B cell (primary cell): ENCODE measurements at regions of chr17 and their contacts with region 1.

Region 1: DNA sequence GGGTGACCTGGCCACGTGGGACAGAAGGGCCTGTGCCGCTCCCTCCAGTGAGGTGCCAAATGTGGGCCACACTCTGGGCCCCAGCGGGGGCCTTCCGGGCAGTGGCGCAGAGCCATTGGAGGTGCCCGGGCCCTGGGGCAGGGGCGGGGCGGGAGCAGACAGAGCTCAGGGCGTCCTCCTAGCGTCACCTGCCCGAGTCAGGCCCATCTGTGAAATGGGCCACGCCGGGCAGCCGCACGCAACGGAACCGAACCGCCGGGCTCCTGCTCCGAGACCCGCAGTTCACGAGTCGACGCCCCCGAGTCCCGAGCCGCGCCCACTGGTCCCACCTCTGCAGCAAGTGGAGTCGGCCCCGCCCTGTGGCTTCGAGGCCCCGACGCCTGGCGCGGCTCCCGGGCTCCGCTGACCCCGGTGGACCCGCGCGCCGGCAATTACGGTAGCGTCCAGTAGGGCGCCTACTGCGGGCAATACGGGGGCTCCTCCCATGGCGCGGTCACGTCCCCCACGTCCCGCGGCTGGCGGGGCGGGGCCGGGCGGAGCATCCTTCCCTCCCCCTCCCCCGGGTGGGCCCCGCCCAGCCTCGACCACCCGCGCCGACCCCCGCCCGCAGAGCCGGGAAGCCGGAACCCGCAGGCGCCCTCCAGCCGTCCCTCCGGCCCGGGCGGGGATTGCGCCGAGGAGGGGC is 1.9 kb downstream of the SLC16A3 start:
- DNase-seq: peak; percentile 69
- ATAC-seq: peak; percentile 52
- H3K4me3 ChIP-seq: peak overlapping the region; percentile 31 to 69 (median 59)
- H3K4me3 Mint-ChIP-seq: peak overlapping the region; percentile 85
- H3K27ac ChIP-seq: peak overlapping the region; percentile 42 to 47
- H3K27ac Mint-ChIP-seq: peak overlapping the region; percentile 73
- H3K4me1 ChIP-seq: peaks cover 29 to 63% of the 10 kb centered on the region in 2 donors
- H3K4me1 Mint-ChIP-seq: peaks cover 31% of the 10 kb centered on the region
- H3K27me3 ChIP-seq: no peaks in the 10 kb centered on the region
- H3K27me3 Mint-ChIP-seq: no peaks in the 10 kb centered on the region
- CTCF ChIP-seq: peak; percentile 67

Region 2: DNA sequence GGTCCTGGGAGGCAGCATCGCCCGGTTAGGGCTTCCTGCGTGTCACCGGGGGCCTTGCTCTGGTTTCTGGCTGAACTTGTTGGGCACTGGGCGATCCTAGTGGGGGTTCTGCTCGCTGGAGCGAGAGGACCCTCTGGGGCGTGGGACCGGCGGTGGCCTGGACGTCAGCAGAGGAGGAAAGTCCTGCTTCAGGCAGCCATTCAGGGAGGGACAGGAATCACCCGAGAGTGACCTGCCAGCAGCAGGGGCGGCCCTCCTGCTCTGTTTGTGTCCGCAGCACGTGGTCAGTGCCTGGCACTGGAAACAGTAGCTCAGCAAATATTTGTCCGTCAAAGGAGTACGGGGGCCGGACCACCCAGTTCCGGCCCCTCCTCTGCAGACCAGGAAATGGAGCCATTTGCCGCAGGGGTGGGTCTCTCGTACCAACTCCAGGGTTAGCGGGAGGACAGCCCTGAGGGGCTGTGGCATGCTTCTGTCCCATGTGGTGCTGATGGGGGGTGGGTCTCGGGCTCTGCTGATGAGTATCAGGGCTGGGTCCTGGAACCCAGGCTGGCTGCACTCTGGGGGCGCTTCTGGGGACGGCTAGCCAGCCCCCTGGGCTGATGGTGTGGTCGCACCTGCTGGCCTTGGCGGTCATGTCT is 1147.5 kb before region 1 on chr17:
- CTCF ChIA-PET with region 1: no interaction called
- POLR2A ChIA-PET with region 1: no interaction called
- intact Hi-C with region 1: no loop called
- DNase-seq: no peak
- ATAC-seq: no peak
- H3K4me3 ChIP-seq: no peak overlapping the region
- H3K4me3 Mint-ChIP-seq: no peak overlapping the region
- H3K27ac ChIP-seq: no peak overlapping the region
- H3K27ac Mint-ChIP-seq: no peak overlapping the region
- H3K4me1 ChIP-seq: no peaks in the 10 kb centered on the region
- H3K4me1 Mint-ChIP-seq: no peaks in the 10 kb centered on the region
- H3K27me3 ChIP-seq: no peaks in the 10 kb centered on the region
- H3K27me3 Mint-ChIP-seq: no peaks in the 10 kb centered on the region
- CTCF ChIP-seq: no peak

Region 3: GRCh38 chr17:82205719-82206508 is 24.9 kb before region 1 on chr17:
- CTCF ChIA-PET with region 1: interaction called, 29 read pairs
- POLR2A ChIA-PET with region 1: interaction called, 12 read pairs
- intact Hi-C with region 1: loop called (anchors 1 kb)
- DNase-seq: peak; percentile 89
- ATAC-seq: peak; percentile 98
- H3K4me3 ChIP-seq: peak overlapping the region in 3 of 5 experiments; percentile 3 to 34 (median 21)
- H3K4me3 Mint-ChIP-seq: peak overlapping the region; percentile 54
- H3K27ac ChIP-seq: peak overlapping the region; percentile 73
- H3K27ac Mint-ChIP-seq: peak overlapping the region; percentile 90
- H3K4me1 ChIP-seq: peaks cover 10 to 11% of the 10 kb centered on the region in 2 donors
- H3K4me1 Mint-ChIP-seq: peaks cover 19% of the 10 kb centered on the region
- H3K27me3 ChIP-seq: no peaks in the 10 kb centered on the region
- H3K27me3 Mint-ChIP-seq: no peaks in the 10 kb centered on the region
- CTCF ChIP-seq: peak; percentile 93

Region 4: GRCh38 chr17:82212331-82213250 is 18.2 kb before region 1 on chr17 and contains the start of gene CCDC57:
- CTCF ChIA-PET with region 1: interaction called, 8 read pairs
- POLR2A ChIA-PET with region 1: interaction called, 46 read pairs
- intact Hi-C with region 1: loop called (anchors 1 kb)
- DNase-seq: peak; percentile 88
- ATAC-seq: peak; percentile 66
- H3K4me3 ChIP-seq: peak within 1 kb of the TSS in 4 of 5 experiments; percentile 52 to 79 (median 68)
- H3K4me3 Mint-ChIP-seq: peak within 1 kb of the TSS; percentile 87
- H3K27ac ChIP-seq: peak within 1 kb of the TSS; percentile 22 to 81
- H3K27ac Mint-ChIP-seq: peak within 1 kb of the TSS; percentile 93
- H3K4me1 ChIP-seq: peaks cover 31 to 37% of the 10 kb centered on the region in 2 donors
- H3K4me1 Mint-ChIP-seq: peaks cover 32% of the 10 kb centered on the region
- H3K27me3 ChIP-seq: no peaks in the 10 kb centered on the region
- H3K27me3 Mint-ChIP-seq: no peaks in the 10 kb centered on the region
- CTCF ChIP-seq: no peak
- total RNA-seq, gene CCDC57: 67.2 and 82.0 TPM in 2 replicates

Region 5: GRCh38 chr17:82273327-82274133 is 42.8 kb after region 1 on chr17 and contains the start of gene CSNK1D:
- CTCF ChIA-PET with region 1: interaction called, 5 read pairs
- POLR2A ChIA-PET with region 1: interaction called, 11 read pairs
- intact Hi-C with region 1: loop called (anchors 2 kb)
- DNase-seq: peak; percentile 97
- ATAC-seq: peak; percentile 77
- H3K4me3 ChIP-seq: peak within 1 kb of the TSS; percentile 70 to 87 (median 80)
- H3K4me3 Mint-ChIP-seq: peak within 1 kb of the TSS; percentile 93
- H3K27ac ChIP-seq: peak within 1 kb of the TSS; percentile 83 to 95
- H3K27ac Mint-ChIP-seq: peak within 1 kb of the TSS; percentile 99
- H3K4me1 ChIP-seq: peaks cover 30 to 48% of the 10 kb centered on the region in 2 donors
- H3K4me1 Mint-ChIP-seq: peaks cover 41% of the 10 kb centered on the region
- H3K27me3 ChIP-seq: peaks cover 0 to 5% (median 0%) of the 10 kb centered on the region in 4 experiments
- H3K27me3 Mint-ChIP-seq: no peaks in the 10 kb centered on the region
- CTCF ChIP-seq: no peak
- total RNA-seq, gene CSNK1D: 241 and 258 TPM in 2 replicates

Region 6: DNA sequence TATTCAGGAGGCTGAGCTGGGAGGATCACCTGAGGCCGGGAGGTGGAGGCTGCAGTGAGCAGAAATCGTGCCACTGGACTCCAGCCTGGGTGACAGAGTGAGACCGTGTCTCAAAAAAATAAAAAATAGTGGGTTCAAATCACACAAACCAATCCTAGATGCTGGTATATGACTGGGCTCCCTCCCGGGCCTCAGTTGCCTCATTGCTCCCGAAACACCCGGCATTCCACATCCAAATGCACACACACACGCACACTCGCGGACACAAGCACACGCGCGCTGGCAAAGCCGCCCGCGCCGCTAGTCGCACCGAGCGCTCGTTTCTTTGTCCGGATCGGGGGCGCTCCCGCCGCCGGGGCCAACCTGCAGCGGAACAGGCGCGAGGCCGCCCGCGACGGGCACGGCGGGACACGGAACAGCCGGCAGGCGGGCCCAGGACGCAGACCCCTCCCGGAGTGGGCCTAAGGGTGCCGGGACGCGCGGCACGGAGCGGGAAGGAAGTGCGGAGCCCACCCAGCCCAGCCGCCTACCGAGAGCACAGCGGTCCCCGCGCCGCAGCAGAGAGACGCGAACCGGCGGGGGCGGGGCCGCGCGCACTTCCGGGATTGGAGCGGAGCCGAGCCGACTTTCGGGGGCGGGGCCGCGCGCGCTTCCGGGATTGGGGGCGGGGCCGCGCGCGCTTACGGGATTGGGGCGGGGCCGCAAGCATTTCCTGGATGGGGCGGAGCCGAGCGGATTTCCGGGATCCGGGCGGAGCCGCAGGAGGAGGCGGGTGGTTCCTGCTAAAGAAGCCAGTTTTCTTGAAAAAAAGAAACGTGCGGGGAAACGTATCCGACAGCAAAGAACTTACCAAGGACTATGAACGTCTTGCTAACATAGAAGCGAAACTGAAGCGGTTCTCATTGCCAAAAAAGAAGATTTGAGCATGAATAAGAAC is 219.7 kb after region 1 on chr17 and contains the start of gene CYBC1:
- CTCF ChIA-PET with region 1: no interaction called
- POLR2A ChIA-PET with region 1: interaction called, 3 read pairs
- intact Hi-C with region 1: loop called (anchors 2 kb)
- DNase-seq: peak; percentile 97
- ATAC-seq: peak; percentile 55
- H3K4me3 ChIP-seq: peak within 1 kb of the TSS; percentile 81 to 99 (median 93)
- H3K4me3 Mint-ChIP-seq: peak within 1 kb of the TSS; percentile 88
- H3K27ac ChIP-seq: peak within 1 kb of the TSS; percentile 95 to 99
- H3K27ac Mint-ChIP-seq: peak within 1 kb of the TSS; percentile 96
- H3K4me1 ChIP-seq: peaks cover 17 to 47% of the 10 kb centered on the region in 2 donors
- H3K4me1 Mint-ChIP-seq: peaks cover 40% of the 10 kb centered on the region
- H3K27me3 ChIP-seq: no peaks in the 10 kb centered on the region
- H3K27me3 Mint-ChIP-seq: no peaks in the 10 kb centered on the region
- CTCF ChIP-seq: no peak
- total RNA-seq, gene CYBC1: 569 and 578 TPM in 2 replicates